OCI-LY7 (cell line): ENCODE measurements at regions of chr4 and their contacts with region 1.

Region 1: GRCh38 chr4:127604949-127605709 is 27.6 kb upstream of the INTU start:
- DNase-seq: peak; percentile 30
- H3K4me3 ChIP-seq: no peak overlapping the region
- H3K27ac ChIP-seq: no peak overlapping the region
- H3K4me1 ChIP-seq: no peaks in the 10 kb centered on the region
- CTCF ChIP-seq: peak; percentile 81

Region 2: DNA sequence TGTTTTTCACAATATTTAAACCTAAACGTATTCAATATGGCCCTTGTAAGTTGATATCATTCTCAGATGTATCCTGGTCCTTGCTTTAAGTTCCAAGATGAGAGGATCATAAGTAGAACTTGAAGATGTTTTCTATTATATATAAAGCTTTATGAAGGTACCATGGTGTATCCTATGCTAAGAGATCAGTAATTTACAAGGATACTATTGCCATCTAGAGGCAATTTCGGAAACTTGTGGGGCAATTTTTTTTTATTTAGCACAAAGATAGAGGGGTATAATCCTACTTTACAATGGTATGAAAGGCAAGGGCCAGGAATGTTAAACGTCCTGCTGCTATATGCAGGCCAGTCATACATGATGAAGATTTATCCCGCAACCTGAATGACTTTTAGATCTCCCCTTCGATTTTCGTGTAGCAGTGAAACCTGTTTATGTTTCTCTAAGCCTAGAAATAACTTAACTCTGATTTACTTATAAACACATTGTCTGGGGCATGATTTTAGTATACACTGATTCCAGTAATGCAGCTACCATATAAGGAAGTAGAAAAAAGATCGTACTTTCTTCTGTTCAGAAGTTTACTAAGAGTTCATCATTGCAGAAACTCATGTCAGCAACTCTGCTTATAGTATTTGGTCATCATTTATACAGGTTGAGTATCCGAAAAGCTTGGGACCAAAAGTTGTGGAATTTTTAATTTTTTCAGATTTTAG is 127.6 kb after region 1 on chr4:
- CTCF ChIA-PET with region 1: no interaction called
- POLR2A ChIA-PET with region 1: no interaction called
- intact Hi-C with region 1: loop called (anchors 1 kb)
- DNase-seq: peak; percentile 35
- H3K4me3 ChIP-seq: no peak overlapping the region
- H3K27ac ChIP-seq: no peak overlapping the region
- H3K4me1 ChIP-seq: no peaks in the 10 kb centered on the region
- CTCF ChIP-seq: peak; percentile 81

Region 3: DNA sequence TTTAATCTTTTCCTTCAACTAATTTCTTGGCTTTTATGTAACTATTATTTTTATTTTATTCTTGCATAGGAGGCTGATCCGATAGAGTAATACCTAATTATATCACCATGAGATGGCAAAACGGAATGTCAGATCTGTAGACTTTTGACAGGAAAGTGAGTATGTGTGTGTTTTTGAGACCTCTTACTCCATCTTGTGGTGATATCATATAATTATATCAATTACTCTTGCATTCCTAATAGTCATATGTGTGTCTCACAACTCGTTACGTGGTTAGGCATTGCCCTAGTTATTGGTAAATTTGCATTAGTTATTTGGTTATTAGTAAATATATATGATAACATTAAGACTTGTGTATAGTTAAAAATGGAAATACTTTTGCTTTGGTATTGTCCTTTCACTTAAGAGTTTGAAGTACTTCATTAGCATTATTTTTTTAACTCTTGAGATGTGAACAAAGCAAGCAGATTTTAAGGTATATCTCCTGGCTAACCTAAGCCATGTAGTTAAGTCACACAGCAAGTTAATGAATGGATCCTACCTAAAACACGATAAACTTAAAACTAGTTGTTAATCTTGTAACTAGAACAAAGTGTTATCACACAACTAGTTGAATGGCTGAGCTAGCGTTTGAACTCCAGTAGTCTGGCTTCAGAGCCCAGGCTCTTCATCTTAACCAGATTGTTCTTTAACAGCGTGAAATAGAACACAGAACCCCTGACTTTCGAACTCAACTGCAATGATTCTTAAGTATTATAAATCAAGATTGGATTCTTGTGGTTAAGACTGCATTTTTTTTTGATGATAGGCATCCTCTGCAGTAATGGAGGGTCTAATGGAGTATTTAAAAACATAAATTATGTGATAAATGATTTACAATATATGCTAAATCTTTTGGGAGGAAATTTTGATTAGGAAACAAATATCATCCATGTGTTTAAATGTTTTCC is 615.4 kb after region 1 on chr4:
- CTCF ChIA-PET with region 1: no interaction called
- POLR2A ChIA-PET with region 1: no interaction called
- intact Hi-C with region 1: loop called (anchors 2 kb)
- DNase-seq: peak; percentile 20
- H3K4me3 ChIP-seq: no peak overlapping the region
- H3K27ac ChIP-seq: no peak overlapping the region
- H3K4me1 ChIP-seq: no peaks in the 10 kb centered on the region
- CTCF ChIP-seq: peak; percentile 73